Sigmoid colon (tissue), 7 donors: ENCODE measurements at regions of chr20 and their contacts with region 1.

Region 1: GRCh38 chr20:31849455-31849925 is 4.1 kb upstream of the FOXS1 start:
- DNase-seq: no peak
- H3K4me3 ChIP-seq: no peak overlapping the region
- H3K27ac ChIP-seq: no peak overlapping the region
- H3K4me1 ChIP-seq: peaks cover 0 to 7% (median 0%) of the 10 kb centered on the region in 4 donors
- H3K27me3 ChIP-seq: peaks cover 4 to 37% (median 10%) of the 10 kb centered on the region in 3 donors
- CTCF ChIP-seq: no peak
- EP300 ChIP-seq: no peak
- POLR2A ChIP-seq: no peak

Region 2: DNA sequence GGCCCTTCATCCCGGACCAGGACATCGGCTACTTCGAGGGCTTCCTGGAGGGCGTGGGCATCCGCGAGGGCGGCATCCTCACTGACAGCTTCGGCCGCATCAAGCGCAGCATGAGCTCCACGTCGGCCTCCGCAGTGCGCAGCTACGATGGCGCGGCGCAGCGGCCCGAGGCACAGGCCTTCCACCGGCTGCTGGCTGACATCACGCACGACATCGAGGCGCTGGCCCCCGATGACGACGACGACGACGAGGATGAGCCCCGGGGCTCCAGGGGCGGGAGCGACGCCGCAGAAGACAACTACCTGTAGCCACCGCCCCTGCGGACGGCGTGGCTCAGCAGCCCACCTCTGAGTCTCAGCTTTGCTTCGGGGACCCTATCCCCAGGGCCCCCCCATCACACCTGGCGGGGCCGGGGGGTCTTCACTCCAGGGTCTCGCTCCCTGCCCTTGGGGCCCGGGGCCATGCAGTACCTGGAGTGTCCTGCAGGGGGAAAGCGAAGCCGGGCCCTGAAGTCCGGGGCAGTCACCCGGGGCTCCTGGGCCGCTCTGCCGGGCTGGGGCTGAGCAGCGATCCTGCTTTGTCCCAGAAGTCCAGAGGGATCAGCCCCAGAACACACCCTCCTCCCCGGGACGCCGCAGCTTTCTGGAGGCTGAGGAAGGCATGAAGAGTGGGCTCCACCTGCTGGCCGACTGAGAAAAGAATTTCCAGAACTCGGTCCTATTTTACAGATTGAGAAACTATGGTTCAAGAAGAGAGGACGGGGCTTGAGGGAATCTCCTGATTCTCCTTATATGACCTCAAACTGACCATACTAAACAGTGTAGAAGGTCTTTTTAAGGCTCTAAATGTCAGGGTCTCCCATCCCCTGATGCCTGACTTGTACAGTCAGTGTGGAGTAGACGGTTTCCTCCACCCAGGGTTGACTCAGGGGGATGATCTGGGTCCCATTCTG is 181.8 kb after region 1 on chr20:
- intact Hi-C with region 1: loop called (anchors 5 kb)
- DNase-seq: peak; percentile 84
- H3K4me3 ChIP-seq: peak overlapping the region in 3 of 4 donors; percentile 14 to 33 (median 29)
- H3K27ac ChIP-seq: no peak overlapping the region
- H3K4me1 ChIP-seq: peaks cover 0 to 10% (median 8%) of the 10 kb centered on the region in 4 donors
- H3K27me3 ChIP-seq: peaks cover 12 to 59% (median 35%) of the 10 kb centered on the region in 3 donors
- CTCF ChIP-seq: peak; percentile 66 to 84 (median 80)
- EP300 ChIP-seq: no peak
- POLR2A ChIP-seq: no peak